K562 (cell line): ENCODE measurements at regions of chrX and their contacts with region 1.

Region 1: GRCh38 chrX:135213200-135213844 is 38.5 kb upstream of the ETDA start:
- DNase-seq: no peak
- ATAC-seq: no peak
- H3K4me3 ChIP-seq: no peak overlapping the region
- H3K27ac ChIP-seq: no peak overlapping the region
- H3K4me1 ChIP-seq: no peaks in the 10 kb centered on the region
- H3K27me3 ChIP-seq: peaks cover 3 to 9% of the 10 kb centered on the region in 2 experiments; a peak in 2 of 5 replicates
- CTCF ChIP-seq: no peak
- EP300 ChIP-seq: no peak
- POLR2A ChIP-seq: no peak
- RAD21 ChIP-seq: no peak

Region 2: DNA sequence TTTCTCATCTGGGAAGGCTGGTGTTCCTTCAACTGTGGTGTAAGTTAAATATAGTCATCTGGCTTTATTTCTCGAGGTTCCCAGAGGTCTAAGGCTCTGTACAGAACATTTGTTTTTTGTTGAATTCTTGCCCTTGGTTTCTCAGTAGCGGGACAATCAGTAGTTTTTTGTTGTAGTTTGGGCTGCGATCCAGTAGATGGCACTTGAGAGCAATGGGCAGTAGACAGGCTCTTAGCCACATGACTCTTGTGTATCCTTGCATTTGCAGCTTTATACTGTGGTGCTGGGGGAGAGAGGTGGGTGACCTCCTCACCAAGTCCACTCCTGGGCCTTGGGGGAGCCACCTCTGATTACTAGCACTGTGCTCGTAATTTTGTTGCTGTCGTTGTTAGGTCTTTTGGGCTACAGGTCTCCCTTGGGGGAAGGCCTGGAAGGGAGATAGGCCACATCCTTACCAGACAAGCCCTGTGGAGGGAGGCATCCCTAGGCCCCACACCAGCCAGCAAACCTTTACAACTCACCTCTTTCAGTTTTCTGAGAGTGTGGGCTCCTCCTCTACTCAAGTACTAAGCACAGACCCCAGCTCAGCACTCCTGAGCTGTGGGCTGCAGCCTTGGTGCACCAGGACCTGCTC is 101.1 kb before region 1 on chrX:
- CTCF ChIA-PET with region 1: no interaction called
- POLR2A ChIA-PET with region 1: no interaction called
- in situ Hi-C with region 1: loop called (anchors 25 kb)
- intact Hi-C with region 1: no loop called
- DNase-seq: peak in 3 of 4 experiments; percentile 10 to 41 (median 22)
- ATAC-seq: peak; percentile 84
- H3K4me3 ChIP-seq: no peak overlapping the region
- H3K27ac ChIP-seq: no peak overlapping the region
- H3K4me1 ChIP-seq: no peaks in the 10 kb centered on the region
- H3K27me3 ChIP-seq: no peaks in the 10 kb centered on the region
- CTCF ChIP-seq: peak; percentile 65 to 72 (median 71)
- EP300 ChIP-seq: no peak
- POLR2A ChIP-seq: no peak
- RAD21 ChIP-seq: peak in 1 of 2 experiments; percentile 58; a peak in 2 of 4 replicates